OCI-LY7 (cell line): ENCODE measurements at regions of chr11 and their contacts with region 1.

Region 1: GRCh38 chr11:107565219-107565937 is at the start of gene ALKBH8:
- DNase-seq: peak; percentile 80
- H3K4me3 ChIP-seq: peak within 1 kb of the TSS; percentile 76
- H3K27ac ChIP-seq: peak within 1 kb of the TSS; percentile 86
- H3K4me1 ChIP-seq: peaks cover 49% of the 10 kb centered on the region
- CTCF ChIP-seq: no peak
- total RNA-seq, gene ALKBH8: 12.2 and 21.3 TPM in 2 replicates

Region 2: GRCh38 chr11:107457558-107458271 is 107.7 kb before region 1 on chr11 and contains the start of gene CWF19L2:
- CTCF ChIA-PET with region 1: no interaction called
- POLR2A ChIA-PET with region 1: interaction called, 20 read pairs
- intact Hi-C with region 1: loop called (anchors 5 kb)
- DNase-seq: peak; percentile 98
- H3K4me3 ChIP-seq: peak within 1 kb of the TSS; percentile 92
- H3K27ac ChIP-seq: peak within 1 kb of the TSS; percentile 77
- H3K4me1 ChIP-seq: peaks cover 16% of the 10 kb centered on the region
- CTCF ChIP-seq: 0 out of 2 replicates have a peak, but pooled peaks have one; percentile 11
- total RNA-seq, gene CWF19L2: 13.4 and 20.6 TPM in 2 replicates

Region 3: GRCh38 chr11:107606141-107606540 is 40.8 kb after region 1 on chr11:
- CTCF ChIA-PET with region 1: no interaction called
- POLR2A ChIA-PET with region 1: no interaction called
- intact Hi-C with region 1: loop called (anchors 5 kb)
- DNase-seq: no peak
- H3K4me3 ChIP-seq: no peak overlapping the region
- H3K27ac ChIP-seq: no peak overlapping the region
- H3K4me1 ChIP-seq: no peaks in the 10 kb centered on the region
- CTCF ChIP-seq: peak; percentile 48

Region 4: DNA sequence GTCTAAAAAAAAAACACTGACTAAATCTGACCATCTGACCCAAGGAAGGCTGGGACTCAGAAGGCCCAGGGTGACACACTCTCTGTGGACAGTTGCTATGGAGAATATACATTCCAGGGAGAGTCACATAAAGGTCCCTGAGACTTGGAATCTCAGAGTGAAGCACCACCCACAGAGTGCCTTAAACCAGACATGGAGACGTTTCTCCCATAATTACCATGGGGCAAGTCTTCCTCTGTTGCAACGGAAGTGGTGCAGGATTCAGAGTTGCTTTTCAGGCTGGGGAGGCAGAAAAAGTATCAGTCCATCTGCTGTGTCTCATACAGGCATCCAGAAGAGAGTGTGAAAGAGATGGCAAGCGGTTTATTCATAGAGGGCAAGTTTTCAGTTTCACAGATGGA is 205.2 kb after region 1 on chr11:
- CTCF ChIA-PET with region 1: no interaction called
- POLR2A ChIA-PET with region 1: interaction called, 8 read pairs
- intact Hi-C with region 1: loop called (anchors 5 kb)
- DNase-seq: no peak
- H3K4me3 ChIP-seq: no peak overlapping the region
- H3K27ac ChIP-seq: no peak overlapping the region
- H3K4me1 ChIP-seq: no peaks in the 10 kb centered on the region
- CTCF ChIP-seq: no peak

Region 5: GRCh38 chr11:107928046-107928766 is 362.8 kb after region 1 on chr11 and contains the start of gene RAB39A:
- CTCF ChIA-PET with region 1: no interaction called
- POLR2A ChIA-PET with region 1: no interaction called
- intact Hi-C with region 1: loop called (anchors 1 kb)
- DNase-seq: peak; percentile 97
- H3K4me3 ChIP-seq: peak within 1 kb of the TSS; percentile 76
- H3K27ac ChIP-seq: no peak within 1 kb of the TSS
- H3K4me1 ChIP-seq: peaks cover 9% of the 10 kb centered on the region
- CTCF ChIP-seq: no peak
- total RNA-seq, gene RAB39A: 0.15 and 0.60 TPM in 2 replicates

Region 6: DNA sequence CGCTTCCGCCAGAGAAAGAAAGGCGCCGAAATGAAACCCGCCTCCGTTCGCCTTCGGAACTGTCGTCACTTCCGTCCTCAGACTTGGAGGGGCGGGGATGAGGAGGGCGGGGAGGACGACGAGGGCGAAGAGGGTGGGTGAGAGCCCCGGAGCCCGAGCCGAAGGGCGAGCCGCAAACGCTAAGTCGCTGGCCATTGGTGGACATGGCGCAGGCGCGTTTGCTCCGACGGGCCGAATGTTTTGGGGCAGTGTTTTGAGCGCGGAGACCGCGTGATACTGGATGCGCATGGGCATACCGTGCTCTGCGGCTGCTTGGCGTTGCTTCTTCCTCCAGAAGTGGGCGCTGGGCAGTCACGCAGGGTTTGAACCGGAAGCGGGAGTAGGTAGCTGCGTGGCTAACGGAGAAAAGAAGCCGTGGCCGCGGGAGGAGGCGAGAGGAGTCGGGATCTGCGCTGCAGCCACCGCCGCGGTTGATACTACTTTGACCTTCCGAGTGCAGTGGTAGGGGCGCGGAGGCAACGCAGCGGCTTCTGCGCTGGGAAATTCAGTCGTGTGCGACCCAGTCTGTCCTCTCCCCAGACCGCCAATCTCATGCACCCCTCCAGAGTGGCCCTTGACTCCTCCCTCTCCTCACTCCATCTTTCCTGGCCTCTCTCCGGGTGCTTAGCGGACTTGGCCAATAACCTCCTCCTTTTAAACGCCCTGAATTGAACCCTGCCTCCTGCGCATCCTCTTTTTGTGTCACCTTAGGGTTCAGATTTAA is 657.5 kb after region 1 on chr11 and contains the start of gene ATM:
- CTCF ChIA-PET with region 1: no interaction called
- POLR2A ChIA-PET with region 1: no interaction called
- intact Hi-C with region 1: loop called (anchors 10 kb)
- DNase-seq: peak; percentile 98
- H3K4me3 ChIP-seq: peak within 1 kb of the TSS; percentile 93
- H3K27ac ChIP-seq: peak within 1 kb of the TSS; percentile 90
- H3K4me1 ChIP-seq: peaks cover 40% of the 10 kb centered on the region
- CTCF ChIP-seq: peak; percentile 79
- total RNA-seq, gene ATM: 125 and 147 TPM in 2 replicates